Caco-2 (cell line): ENCODE measurements at regions of chr4 and their contacts with region 1.

Region 1: DNA sequence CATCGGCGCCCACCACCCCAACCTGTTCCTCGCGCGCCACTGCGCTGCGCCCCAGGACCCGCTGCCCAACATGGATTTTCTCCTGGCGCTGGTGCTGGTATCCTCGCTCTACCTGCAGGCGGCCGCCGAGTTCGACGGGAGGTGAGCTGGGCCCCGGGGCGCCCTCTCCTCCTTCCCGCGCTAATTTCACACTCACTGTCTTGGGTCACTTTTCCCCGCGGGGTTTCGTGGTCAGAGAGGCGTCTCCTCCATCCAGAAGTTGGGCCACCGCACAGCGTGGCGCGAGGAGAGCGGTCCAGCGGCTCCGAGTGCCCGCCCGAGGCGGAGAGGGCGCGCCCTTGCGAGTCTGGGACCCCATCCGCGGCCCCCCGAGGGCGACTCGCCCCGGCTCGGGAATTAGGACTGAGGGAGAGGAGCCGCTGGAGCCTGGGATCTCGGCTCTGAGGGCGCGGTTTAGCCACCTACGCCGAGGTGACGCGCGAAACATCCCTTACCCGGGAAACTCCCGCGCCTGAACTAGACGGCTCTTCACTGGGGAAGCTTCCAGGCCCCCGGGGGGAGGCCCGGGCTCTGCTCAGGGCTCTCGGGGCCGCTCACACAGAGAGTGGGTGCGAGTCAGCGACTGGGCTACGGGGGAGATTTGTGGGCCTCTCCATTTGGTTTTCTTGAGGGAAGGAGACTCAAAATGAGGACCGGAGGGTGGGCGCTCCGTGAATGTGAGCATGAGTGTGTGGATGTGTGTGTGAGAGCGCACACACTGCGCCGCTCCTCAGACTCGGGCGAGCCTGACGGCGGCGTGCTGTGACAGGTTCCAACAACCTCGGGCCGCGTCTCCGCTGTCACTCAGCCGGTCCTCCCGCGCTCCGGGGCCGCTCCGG is 551 bp downstream of the NPNT start:
- DNase-seq: peak; percentile 56 to 57
- H3K4me3 ChIP-seq: peak overlapping the region; percentile 81
- H3K4me3 Mint-ChIP-seq: peak overlapping the region; percentile 63
- H3K27ac Mint-ChIP-seq: no peak overlapping the region
- H3K4me1 ChIP-seq: peaks cover 14% of the 10 kb centered on the region
- H3K4me1 Mint-ChIP-seq: peaks cover 31% of the 10 kb centered on the region
- H3K27me3 ChIP-seq: no peaks in the 10 kb centered on the region
- H3K27me3 Mint-ChIP-seq: peaks cover 3% of the 10 kb centered on the region
- CTCF ChIP-seq: peak; percentile 26 to 43

Region 2: DNA sequence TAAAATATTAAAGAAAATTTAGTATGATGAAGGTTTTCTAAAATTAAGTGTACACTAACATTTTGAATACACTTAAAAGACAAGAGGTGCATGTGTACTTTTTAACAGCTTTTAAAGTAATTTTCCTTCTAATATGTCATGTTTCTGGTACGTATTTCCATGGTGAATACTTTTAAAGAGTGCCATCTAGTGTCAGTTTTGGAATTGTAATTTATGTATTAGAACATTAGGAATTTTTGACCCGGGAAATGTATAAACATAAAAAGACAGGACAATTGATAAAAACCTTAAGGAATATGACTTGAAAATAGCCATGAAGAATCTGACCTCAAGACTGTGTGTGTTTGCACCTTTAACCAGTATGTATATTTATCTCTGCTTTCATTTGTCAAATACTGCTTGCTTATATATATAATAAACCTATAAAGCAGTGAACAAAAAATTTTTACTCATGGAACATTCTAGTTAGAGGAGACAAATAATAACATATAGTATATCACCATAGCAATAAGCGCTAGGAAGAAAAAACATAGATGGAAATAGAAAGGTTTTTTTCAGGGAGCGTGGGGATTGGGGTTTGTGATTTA is 180.0 kb before region 1 on chr4:
- CTCF ChIA-PET with region 1: interaction called, 4 read pairs
- POLR2A ChIA-PET with region 1: no interaction called
- intact Hi-C with region 1: loop called (anchors 5 kb)
- DNase-seq: no peak
- H3K4me3 ChIP-seq: no peak overlapping the region
- H3K4me3 Mint-ChIP-seq: no peak overlapping the region
- H3K27ac Mint-ChIP-seq: no peak overlapping the region
- H3K4me1 ChIP-seq: peaks cover 5% of the 10 kb centered on the region; the same call in 1 of the 2 replicates
- H3K4me1 Mint-ChIP-seq: no peaks in the 10 kb centered on the region
- H3K27me3 ChIP-seq: no peaks in the 10 kb centered on the region
- H3K27me3 Mint-ChIP-seq: no peaks in the 10 kb centered on the region
- CTCF ChIP-seq: peak; percentile 24 to 31

Region 3: GRCh38 chr4:105909787-105910281 is 14.0 kb after region 1 on chr4:
- CTCF ChIA-PET with region 1: no interaction called
- POLR2A ChIA-PET with region 1: interaction called, 8 read pairs
- intact Hi-C with region 1: loop called (anchors 1 kb)
- DNase-seq: peak; percentile 57 to 64
- H3K4me3 ChIP-seq: no peak overlapping the region
- H3K4me3 Mint-ChIP-seq: no peak overlapping the region
- H3K27ac Mint-ChIP-seq: peak overlapping the region; percentile 90
- H3K4me1 ChIP-seq: peaks cover 21% of the 10 kb centered on the region
- H3K4me1 Mint-ChIP-seq: peaks cover 10% of the 10 kb centered on the region
- H3K27me3 ChIP-seq: no peaks in the 10 kb centered on the region
- H3K27me3 Mint-ChIP-seq: no peaks in the 10 kb centered on the region
- CTCF ChIP-seq: no peak

Region 4: GRCh38 chr4:106058919-106059318 is 163.1 kb after region 1 on chr4:
- CTCF ChIA-PET with region 1: interaction called, 3 read pairs
- POLR2A ChIA-PET with region 1: no interaction called
- intact Hi-C with region 1: loop called (anchors 10 kb)
- DNase-seq: no peak
- H3K4me3 ChIP-seq: no peak overlapping the region
- H3K4me3 Mint-ChIP-seq: no peak overlapping the region
- H3K27ac Mint-ChIP-seq: no peak overlapping the region
- H3K4me1 ChIP-seq: peaks cover 19% of the 10 kb centered on the region; the same call in 1 of the 2 replicates
- H3K4me1 Mint-ChIP-seq: peaks cover 7% of the 10 kb centered on the region
- H3K27me3 ChIP-seq: no peaks in the 10 kb centered on the region
- H3K27me3 Mint-ChIP-seq: no peaks in the 10 kb centered on the region
- CTCF ChIP-seq: no peak

Region 5: DNA sequence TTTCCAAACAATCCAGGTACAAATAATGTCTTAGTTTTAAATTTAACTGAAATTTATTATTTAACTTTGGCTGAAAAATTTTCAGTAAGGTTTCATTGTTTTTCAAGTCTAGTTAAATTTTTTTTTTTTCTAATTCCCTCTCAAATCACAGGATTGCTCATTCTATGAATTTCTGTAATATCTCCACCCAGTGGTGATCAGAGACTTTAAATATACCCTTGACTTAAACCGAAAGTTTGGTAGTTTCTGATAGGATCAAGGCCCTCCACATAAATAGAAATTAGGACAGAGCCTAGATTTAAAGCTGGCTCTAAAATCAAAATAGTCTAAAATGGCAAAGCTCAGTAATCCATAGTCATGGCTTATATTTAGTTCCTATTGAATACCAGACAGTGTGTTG is 244.8 kb after region 1 on chr4:
- CTCF ChIA-PET with region 1: no interaction called
- POLR2A ChIA-PET with region 1: no interaction called
- intact Hi-C with region 1: no loop called
- DNase-seq: no peak
- H3K4me3 ChIP-seq: no peak overlapping the region
- H3K4me3 Mint-ChIP-seq: no peak overlapping the region
- H3K27ac Mint-ChIP-seq: no peak overlapping the region
- H3K4me1 ChIP-seq: no peaks in the 10 kb centered on the region
- H3K4me1 Mint-ChIP-seq: no peaks in the 10 kb centered on the region
- H3K27me3 ChIP-seq: no peaks in the 10 kb centered on the region
- H3K27me3 Mint-ChIP-seq: no peaks in the 10 kb centered on the region
- CTCF ChIP-seq: no peak

Region 6: DNA sequence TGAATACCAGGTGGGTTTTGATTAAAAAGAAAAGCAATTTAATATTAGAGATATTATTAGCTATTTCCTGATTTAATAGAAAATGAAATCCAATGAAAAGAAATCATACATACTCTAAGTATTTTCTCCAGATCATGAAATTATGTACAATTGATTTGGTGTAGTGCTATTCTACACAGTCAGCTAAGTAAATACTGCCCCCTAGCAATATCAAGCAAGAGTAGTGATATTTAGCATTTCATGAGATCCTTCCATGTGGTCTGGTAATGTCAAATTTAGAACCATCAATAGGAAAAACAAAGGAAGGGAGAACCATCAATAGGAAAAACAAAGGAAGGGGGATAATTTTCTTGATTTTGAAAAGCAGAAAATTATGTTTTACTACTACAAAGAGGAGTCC is 305.6 kb after region 1 on chr4:
- CTCF ChIA-PET with region 1: no interaction called
- POLR2A ChIA-PET with region 1: interaction called, 6 read pairs
- intact Hi-C with region 1: loop called (anchors 5 kb)
- DNase-seq: no peak
- H3K4me3 ChIP-seq: no peak overlapping the region
- H3K4me3 Mint-ChIP-seq: no peak overlapping the region
- H3K27ac Mint-ChIP-seq: no peak overlapping the region
- H3K4me1 ChIP-seq: no peaks in the 10 kb centered on the region
- H3K4me1 Mint-ChIP-seq: no peaks in the 10 kb centered on the region
- H3K27me3 ChIP-seq: no peaks in the 10 kb centered on the region
- H3K27me3 Mint-ChIP-seq: no peaks in the 10 kb centered on the region
- CTCF ChIP-seq: peak; percentile 13 to 22